CD4-positive, alpha-beta T cell (primary cell): ENCODE measurements at regions of chr21 and their contacts with region 1.

Region 1: DNA sequence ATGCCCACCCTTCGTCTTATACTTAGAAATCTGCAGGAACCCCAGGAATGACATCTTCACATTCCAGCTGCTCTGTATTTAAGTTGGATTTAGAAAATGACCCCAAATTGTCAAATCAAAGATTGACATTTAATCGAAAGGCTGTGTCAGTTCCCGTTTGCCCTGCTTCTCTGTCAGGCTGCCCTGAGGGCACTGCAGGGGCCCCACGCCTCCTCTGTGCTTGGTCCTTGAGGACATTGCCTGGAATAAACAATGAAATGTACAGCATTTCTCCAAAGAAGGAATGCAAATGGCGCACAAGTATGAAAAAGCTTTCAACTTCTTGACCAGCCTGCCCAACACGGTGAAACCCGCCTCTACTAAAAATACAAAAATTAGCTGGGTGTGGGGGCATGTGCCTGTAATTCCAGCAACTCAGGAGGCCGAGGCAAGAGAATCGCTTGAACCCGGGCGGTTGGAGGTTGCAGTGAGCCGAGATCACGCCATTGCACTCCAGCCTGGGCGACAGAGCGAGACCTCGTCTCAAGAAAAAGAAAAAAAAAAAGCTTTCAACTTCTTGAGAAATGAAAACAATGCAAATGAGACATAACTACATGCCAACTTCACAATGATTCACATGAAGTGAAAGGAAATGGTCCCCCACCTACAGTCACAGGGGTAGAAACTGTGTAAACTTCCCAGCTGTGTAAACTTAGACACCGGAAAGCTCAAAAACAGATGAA is 3.0 kb downstream of the TMPRSS3 start:
- DNase-seq: peak in 4 of 14 experiments; percentile 53 to 66 (median 58)
- ATAC-seq: peak; percentile 90
- H3K4me3 ChIP-seq: peak overlapping the region; percentile 17
- H3K4me3 Mint-ChIP-seq: peak overlapping the region; percentile 64
- H3K27ac ChIP-seq: no peak overlapping the region
- H3K27ac Mint-ChIP-seq: peak overlapping the region; percentile 52
- H3K4me1 ChIP-seq: peaks cover 37% of the 10 kb centered on the region
- H3K4me1 Mint-ChIP-seq: peaks cover 63% of the 10 kb centered on the region
- H3K27me3 ChIP-seq: no peaks in the 10 kb centered on the region
- H3K27me3 Mint-ChIP-seq: no peaks in the 10 kb centered on the region
- CTCF ChIP-seq: no peak

Region 2: GRCh38 chr21:42363310-42363709 is 29.6 kb before region 1 on chr21:
- CTCF ChIA-PET with region 1: no interaction called
- POLR2A ChIA-PET with region 1: no interaction called
- intact Hi-C with region 1: loop called in 1 of 2 experiments (anchors 2 kb)
- DNase-seq: no peak
- ATAC-seq: no peak
- H3K4me3 ChIP-seq: no peak overlapping the region
- H3K4me3 Mint-ChIP-seq: no peak overlapping the region
- H3K27ac ChIP-seq: no peak overlapping the region
- H3K27ac Mint-ChIP-seq: no peak overlapping the region
- H3K4me1 ChIP-seq: peaks cover 6% of the 10 kb centered on the region
- H3K4me1 Mint-ChIP-seq: no peaks in the 10 kb centered on the region
- H3K27me3 ChIP-seq: no peaks in the 10 kb centered on the region
- H3K27me3 Mint-ChIP-seq: no peaks in the 10 kb centered on the region
- CTCF ChIP-seq: no peak

Region 3: GRCh38 chr21:42437786-42438645 is 45.1 kb after region 1 on chr21:
- CTCF ChIA-PET with region 1: no interaction called
- POLR2A ChIA-PET with region 1: interaction called, 3 read pairs
- intact Hi-C with region 1: loop called in 1 of 2 experiments (anchors 5 kb)
- DNase-seq: no peak
- ATAC-seq: no peak
- H3K4me3 ChIP-seq: no peak overlapping the region
- H3K4me3 Mint-ChIP-seq: no peak overlapping the region
- H3K27ac ChIP-seq: peak overlapping the region in 1 of 2 donors; percentile 5
- H3K27ac Mint-ChIP-seq: peak overlapping the region; percentile 84
- H3K4me1 ChIP-seq: peaks cover 31% of the 10 kb centered on the region
- H3K4me1 Mint-ChIP-seq: peaks cover 62% of the 10 kb centered on the region
- H3K27me3 ChIP-seq: no peaks in the 10 kb centered on the region
- H3K27me3 Mint-ChIP-seq: no peaks in the 10 kb centered on the region
- CTCF ChIP-seq: no peak